CD8-positive, alpha-beta T cell (primary cell): ENCODE measurements at regions of chr19 and their contacts with region 1.

Region 1: GRCh38 chr19:34974646-34975045 is 10.6 kb upstream of the ZNF792 start:
- DNase-seq: peak in 1 of 9 experiments; percentile 20
- ATAC-seq: no peak
- H3K4me3 ChIP-seq: no peak overlapping the region
- H3K4me3 Mint-ChIP-seq: no peak overlapping the region
- H3K27ac ChIP-seq: no peak overlapping the region
- H3K27ac Mint-ChIP-seq: peak overlapping the region; percentile 89
- H3K4me1 ChIP-seq: peaks cover 25% of the 10 kb centered on the region
- H3K4me1 Mint-ChIP-seq: peaks cover 29% of the 10 kb centered on the region
- H3K27me3 ChIP-seq: no peaks in the 10 kb centered on the region
- H3K27me3 Mint-ChIP-seq: no peaks in the 10 kb centered on the region
- CTCF ChIP-seq: no peak

Region 2: GRCh38 chr19:34963573-34964409 is 10.9 kb before region 1 on chr19 and contains the start of gene ZNF792:
- CTCF ChIA-PET with region 1: interaction called, 18 read pairs
- POLR2A ChIA-PET with region 1: interaction called, 4 read pairs
- intact Hi-C with region 1: no loop called
- DNase-seq: peak in 8 of 9 experiments; percentile 34 to 73 (median 46)
- ATAC-seq: peak; percentile 68
- H3K4me3 ChIP-seq: peak within 1 kb of the TSS; percentile 60 to 94
- H3K4me3 Mint-ChIP-seq: peak within 1 kb of the TSS; percentile 90
- H3K27ac ChIP-seq: peak within 1 kb of the TSS; percentile 51 to 57
- H3K27ac Mint-ChIP-seq: peak within 1 kb of the TSS; percentile 92
- H3K4me1 ChIP-seq: peaks cover 16% of the 10 kb centered on the region
- H3K4me1 Mint-ChIP-seq: peaks cover 32% of the 10 kb centered on the region
- H3K27me3 ChIP-seq: no peaks in the 10 kb centered on the region
- H3K27me3 Mint-ChIP-seq: no peaks in the 10 kb centered on the region
- CTCF ChIP-seq: no peak
- total RNA-seq, gene ZNF792: 5.0 to 5.7 TPM

Region 3: DNA sequence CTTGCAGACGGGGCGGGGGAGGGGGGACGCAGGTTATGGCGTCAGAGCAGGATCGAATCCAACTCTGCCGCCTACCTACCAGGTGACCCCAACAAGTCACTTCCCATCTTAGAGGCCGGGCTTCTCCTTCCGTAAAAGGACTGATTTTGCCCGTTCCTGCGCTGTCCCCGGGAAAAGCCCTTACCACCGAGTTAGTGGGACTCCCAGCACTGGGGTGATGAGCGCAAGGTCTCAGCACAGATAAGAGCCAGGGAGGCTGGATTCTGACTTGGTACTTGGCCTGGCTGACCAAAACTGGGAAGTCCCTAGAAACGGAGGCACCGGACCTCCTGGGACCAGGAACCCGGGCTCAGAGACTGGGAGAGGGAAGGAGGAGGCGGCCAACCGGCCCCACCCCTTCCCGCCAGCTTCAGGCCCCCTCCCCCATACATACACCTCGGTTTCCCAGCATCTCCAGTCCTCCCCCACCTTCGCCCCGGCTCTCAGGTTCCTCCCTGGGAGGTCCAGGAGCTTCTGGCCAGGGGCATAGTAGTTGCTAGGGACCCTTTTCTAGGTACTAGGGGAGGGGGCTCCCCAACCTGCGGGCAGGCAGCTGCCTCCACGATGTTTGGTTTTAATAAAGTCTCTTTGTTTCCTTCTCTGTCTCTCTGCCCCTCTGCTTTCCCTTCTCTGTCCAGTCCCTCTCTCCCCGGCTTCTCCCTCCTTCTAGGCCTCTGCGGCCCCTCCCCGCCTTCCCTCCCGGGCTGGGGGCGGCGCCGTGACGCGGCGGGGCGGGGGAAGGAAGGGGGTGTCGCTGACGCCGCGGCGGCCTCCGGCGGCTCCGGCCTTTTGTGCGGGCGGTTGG is 25.1 kb after region 1 on chr19 and contains the start of gene GRAMD1A:
- CTCF ChIA-PET with region 1: interaction called, 44 read pairs
- POLR2A ChIA-PET with region 1: interaction called, 22 read pairs
- intact Hi-C with region 1: loop called (anchors 1 kb)
- DNase-seq: peak; percentile 33 to 85 (median 70)
- ATAC-seq: peak; percentile 37
- H3K4me3 ChIP-seq: peak within 1 kb of the TSS; percentile 64 to 71
- H3K4me3 Mint-ChIP-seq: peak within 1 kb of the TSS; percentile 97
- H3K27ac ChIP-seq: peak within 1 kb of the TSS; percentile 86 to 89
- H3K27ac Mint-ChIP-seq: peak within 1 kb of the TSS; percentile 98
- H3K4me1 ChIP-seq: peaks cover 79% of the 10 kb centered on the region
- H3K4me1 Mint-ChIP-seq: peaks cover 64% of the 10 kb centered on the region
- H3K27me3 ChIP-seq: no peaks in the 10 kb centered on the region
- H3K27me3 Mint-ChIP-seq: no peaks in the 10 kb centered on the region
- CTCF ChIP-seq: no peak
- total RNA-seq, gene GRAMD1A: 207 to 221 TPM

Region 4: DNA sequence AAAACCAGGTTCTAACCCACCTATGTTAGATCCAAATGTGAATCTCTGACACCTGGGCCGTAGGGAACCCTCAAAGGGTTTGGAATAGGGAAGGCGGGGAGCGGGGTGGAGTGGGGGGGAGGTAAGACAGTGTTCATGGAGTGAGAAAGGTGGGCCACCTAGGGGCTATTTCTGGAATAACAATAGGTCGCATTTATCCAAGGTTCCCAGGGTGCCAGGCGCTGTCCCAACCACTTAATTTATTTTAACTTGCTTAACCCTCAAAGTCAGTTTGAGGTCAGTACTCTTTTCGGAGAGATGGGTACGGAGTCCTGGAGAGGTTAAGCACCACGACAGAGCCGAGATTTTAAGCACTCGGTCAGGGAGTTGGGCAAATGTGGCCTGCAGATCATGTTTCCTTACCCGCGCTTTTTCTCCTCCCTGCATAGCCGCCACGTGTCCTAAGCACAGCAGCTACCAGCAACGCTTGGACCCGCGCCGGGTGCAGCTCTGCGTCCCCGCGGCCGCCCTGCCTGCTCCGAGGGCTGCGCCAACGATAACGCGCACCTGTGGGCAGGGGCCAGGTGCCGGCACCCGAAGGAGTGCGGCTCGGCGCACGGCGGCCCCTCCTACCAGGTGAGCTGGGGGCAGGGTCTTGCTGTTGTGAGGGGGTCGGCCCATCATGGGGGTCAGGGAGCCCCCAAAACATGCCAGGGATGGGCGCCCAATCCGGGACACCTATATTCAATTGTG is 116.0 kb after region 1 on chr19:
- CTCF ChIA-PET with region 1: interaction called, 12 read pairs
- POLR2A ChIA-PET with region 1: no interaction called
- intact Hi-C with region 1: loop called in 1 of 2 experiments (anchors 1 kb)
- DNase-seq: peak in 7 of 9 experiments; percentile 4 to 72 (median 43)
- ATAC-seq: peak; percentile 84
- H3K4me3 ChIP-seq: no peak overlapping the region
- H3K4me3 Mint-ChIP-seq: no peak overlapping the region
- H3K27ac ChIP-seq: no peak overlapping the region
- H3K27ac Mint-ChIP-seq: no peak overlapping the region
- H3K4me1 ChIP-seq: peaks cover 16% of the 10 kb centered on the region
- H3K4me1 Mint-ChIP-seq: peaks cover 14% of the 10 kb centered on the region
- H3K27me3 ChIP-seq: peaks cover 0 to 2% of the 10 kb centered on the region in 2 experiments
- H3K27me3 Mint-ChIP-seq: peaks cover 4% of the 10 kb centered on the region
- CTCF ChIP-seq: peak; percentile 65

Region 5: DNA sequence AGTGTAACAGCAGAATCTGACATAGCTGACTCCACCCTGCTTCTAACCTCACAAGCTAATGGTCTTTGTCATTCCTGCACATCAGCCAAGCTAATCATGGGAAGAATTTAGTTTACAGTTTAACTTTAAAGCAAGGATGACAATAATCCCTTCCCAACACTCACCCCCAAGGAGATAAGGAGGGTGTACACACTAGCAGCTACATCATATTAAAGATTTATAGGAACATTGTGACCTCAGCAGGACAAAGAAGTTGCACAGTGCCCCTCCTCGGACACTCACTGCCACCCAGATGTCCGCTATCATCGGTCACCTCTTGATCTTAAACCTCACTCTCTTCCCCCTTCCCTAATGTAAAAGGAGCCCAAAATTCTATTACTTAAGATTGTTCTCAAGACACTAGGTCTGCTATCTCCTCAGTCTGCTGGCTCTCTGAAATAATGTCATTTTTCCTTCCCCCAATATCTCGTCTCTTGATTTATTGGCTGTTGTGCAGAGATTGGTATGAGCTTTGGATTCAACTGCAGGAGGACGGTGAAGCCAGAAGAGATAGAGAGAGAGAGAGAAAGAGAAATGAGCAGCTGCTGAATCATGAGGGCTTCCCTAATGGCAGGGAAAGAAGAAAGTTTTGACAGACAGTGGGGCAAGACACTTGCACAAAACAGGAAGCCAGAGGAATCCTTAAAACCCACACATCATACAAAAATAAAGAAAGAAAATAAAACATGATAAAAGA is 455.9 kb after region 1 on chr19:
- CTCF ChIA-PET with region 1: no interaction called
- POLR2A ChIA-PET with region 1: no interaction called
- intact Hi-C with region 1: no loop called
- DNase-seq: no peak
- ATAC-seq: no peak
- H3K4me3 ChIP-seq: no peak overlapping the region
- H3K4me3 Mint-ChIP-seq: no peak overlapping the region
- H3K27ac ChIP-seq: no peak overlapping the region
- H3K27ac Mint-ChIP-seq: no peak overlapping the region
- H3K4me1 ChIP-seq: no peaks in the 10 kb centered on the region
- H3K4me1 Mint-ChIP-seq: peaks cover 13% of the 10 kb centered on the region
- H3K27me3 ChIP-seq: no peaks in the 10 kb centered on the region
- H3K27me3 Mint-ChIP-seq: peaks cover 4% of the 10 kb centered on the region
- CTCF ChIP-seq: no peak